Ascending aorta (tissue), 2 donors: ENCODE measurements at regions of chr2 and their contacts with region 1.

Region 1: DNA sequence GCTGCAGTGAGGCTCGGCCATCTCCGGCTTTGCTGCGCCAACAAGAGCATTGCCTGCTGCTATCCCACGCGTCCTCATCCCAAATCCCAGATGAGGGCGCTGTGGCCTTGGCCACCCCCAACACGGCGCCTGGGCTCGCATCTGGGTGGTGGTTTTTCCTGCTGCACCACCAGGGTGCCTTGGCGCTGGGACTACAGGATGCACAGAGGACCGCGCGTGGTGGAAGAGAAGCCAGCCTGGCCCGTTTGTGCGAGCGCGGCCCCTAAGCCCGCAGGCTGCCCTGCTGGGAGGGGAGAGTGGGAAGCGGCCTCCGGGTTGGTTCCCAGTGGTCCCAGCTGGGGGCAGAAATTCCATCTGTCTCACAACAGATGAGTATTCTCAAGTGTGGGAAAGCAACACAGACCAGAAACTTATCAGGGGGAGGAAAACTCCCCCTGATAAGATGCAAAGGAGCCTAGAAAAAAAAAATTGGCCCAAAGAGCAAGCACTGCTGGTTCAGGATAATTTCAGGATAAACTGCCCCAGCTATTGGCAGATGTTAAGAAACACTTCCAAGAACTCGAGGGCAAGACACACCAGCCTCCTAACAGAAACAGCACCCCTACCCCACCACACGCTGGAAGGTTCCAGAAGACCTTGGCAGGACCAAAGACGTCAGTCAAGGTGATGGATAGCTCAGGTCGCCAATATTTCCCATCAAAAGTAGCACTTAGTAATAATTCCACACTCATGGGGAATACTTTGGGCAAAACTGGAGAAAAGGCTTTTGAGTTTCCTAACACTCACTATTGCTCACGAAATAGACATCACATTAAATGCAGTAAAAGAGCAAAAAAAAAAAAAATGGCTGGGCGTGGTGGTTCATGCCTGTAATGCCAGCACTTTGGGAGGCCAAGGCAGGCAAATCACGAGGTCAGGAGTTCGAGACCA is 152.1 kb downstream of the PXDN start:
- DNase-seq: peak; percentile 32 to 89
- H3K4me3 ChIP-seq: peak overlapping the region; percentile 12 to 36
- H3K27ac ChIP-seq: peak overlapping the region; percentile 33 to 55
- H3K4me1 ChIP-seq: peaks cover 0 to 9% of the 10 kb centered on the region in 2 donors
- H3K27me3 ChIP-seq: no peaks in the 10 kb centered on the region
- CTCF ChIP-seq: peak; percentile 76 to 88 (median 88)

Region 2: GRCh38 chr2:979069-979928 is 612.9 kb before region 1 on chr2:
- intact Hi-C with region 1: no loop called
- DNase-seq: no peak
- H3K4me3 ChIP-seq: no peak overlapping the region
- H3K27ac ChIP-seq: no peak overlapping the region
- H3K4me1 ChIP-seq: no peaks in the 10 kb centered on the region
- H3K27me3 ChIP-seq: no peaks in the 10 kb centered on the region
- CTCF ChIP-seq: no peak

Region 3: DNA sequence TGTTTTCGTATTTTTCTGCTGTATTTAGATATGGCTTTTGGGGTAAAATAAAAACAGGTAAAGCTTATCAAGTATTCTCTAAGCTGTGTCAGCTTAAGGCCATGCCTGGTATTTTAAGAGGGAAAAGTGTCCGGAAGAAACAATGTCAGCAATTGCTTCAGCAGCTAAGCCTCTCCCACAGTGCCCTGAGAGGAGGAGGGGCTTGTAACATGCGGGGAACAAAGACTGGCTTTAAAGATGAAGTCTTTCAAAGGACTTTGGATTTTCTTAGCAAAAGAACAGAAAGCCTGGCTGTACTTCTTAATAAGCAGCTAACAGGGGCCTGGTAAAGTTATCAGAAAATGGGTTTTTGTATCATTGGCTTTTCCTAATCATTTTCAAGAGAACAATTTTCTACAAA is 49.3 kb after region 1 on chr2:
- intact Hi-C with region 1: loop called (anchors 5 kb)
- DNase-seq: no peak
- H3K4me3 ChIP-seq: no peak overlapping the region
- H3K27ac ChIP-seq: peak overlapping the region; percentile 71
- H3K4me1 ChIP-seq: peaks cover 3 to 18% of the 10 kb centered on the region in 2 donors
- H3K27me3 ChIP-seq: no peaks in the 10 kb centered on the region
- CTCF ChIP-seq: no peak

Region 4: GRCh38 chr2:1742681-1743395 is 150.6 kb after region 1 on chr2:
- intact Hi-C with region 1: loop called (anchors 1 kb)
- DNase-seq: peak; percentile 67 to 95
- H3K4me3 ChIP-seq: peak overlapping the region; percentile 80 to 92
- H3K27ac ChIP-seq: peak overlapping the region; percentile 99 to 100
- H3K4me1 ChIP-seq: peaks cover 4 to 30% of the 10 kb centered on the region in 2 donors
- H3K27me3 ChIP-seq: no peaks in the 10 kb centered on the region
- CTCF ChIP-seq: peak; percentile 42 to 73 (median 54)

Region 5: DNA sequence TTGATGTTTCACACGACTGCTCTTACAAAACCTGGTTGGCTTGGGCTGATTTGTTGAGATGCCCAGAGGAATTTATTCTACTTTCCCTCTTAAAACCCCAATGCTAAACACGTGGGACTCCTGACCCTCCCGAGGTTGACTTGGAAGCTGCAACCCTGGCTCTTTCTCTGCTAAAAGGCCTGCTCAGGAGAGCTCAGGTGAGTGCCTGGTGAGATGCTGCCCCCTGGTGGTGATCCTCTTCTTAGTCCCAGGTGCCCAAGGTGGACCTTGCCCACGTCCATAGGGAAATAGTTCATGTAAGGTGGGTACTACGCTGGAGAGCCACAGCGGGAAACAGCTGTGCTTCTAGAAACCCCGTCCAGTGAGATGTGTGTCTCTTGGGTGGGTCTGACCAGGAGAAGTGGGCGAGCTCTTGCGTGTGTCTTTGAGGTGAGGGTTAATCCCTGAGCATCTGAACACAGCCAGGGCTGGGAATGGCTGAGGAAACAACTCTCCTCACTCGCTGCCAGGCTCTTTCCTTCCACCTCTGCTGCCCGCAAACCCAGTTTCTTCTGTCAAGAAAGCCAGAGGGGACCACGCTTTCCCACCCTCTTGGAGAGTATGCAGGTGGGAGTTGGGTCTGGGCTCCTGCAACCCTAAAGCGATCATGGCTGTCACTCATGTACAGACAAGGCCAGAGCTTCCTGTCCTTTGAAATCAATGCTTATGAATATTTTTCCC is 177.6 kb after region 1 on chr2:
- intact Hi-C with region 1: loop called (anchors 2 kb)
- DNase-seq: peak in 1 of 2 donors; percentile 76
- H3K4me3 ChIP-seq: no peak overlapping the region
- H3K27ac ChIP-seq: no peak overlapping the region
- H3K4me1 ChIP-seq: peaks cover 7 to 18% of the 10 kb centered on the region in 2 donors
- H3K27me3 ChIP-seq: no peaks in the 10 kb centered on the region
- CTCF ChIP-seq: peak in 2 of 3 experiments; percentile 71 to 74